CD8-positive, alpha-beta T cell (primary cell): ENCODE measurements at regions of chr11 and their contacts with region 1.

Region 1: DNA sequence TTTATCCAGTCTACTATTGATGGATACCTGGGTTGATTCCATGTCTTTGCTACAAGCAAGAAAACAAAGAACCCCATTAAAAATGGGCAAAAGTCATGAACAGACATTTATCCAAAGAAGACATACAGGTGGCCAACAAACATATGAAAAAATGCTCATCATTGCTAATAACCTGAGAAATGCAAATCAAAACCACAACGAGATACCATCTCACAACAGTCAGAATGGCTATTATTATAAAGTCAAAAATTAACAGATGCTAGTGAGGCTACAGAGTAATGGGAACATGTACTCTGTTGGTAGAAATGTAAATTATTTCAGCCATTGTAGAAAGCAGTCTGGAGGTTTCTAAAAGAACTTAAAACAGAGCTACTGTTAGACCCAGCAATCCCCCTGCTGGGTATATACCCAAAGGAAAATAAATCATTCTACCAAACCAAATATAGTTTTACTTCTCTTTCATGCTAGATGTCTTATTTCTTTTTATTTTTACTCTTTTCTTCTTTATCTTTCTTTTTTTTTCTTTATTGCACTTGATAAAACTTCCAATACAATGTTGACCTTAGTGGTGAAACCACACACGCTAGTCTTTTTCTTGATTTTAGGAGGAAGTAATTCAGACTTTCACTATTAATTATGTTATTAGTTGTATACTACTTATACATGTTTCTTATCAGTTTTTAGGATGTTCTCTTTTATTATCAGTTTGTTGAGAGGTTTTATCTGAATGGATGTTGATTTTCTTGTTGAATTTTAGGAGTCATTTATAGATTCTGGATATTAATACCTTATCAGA is 14.3 kb downstream of the TRIM22 start:
- DNase-seq: no peak
- ATAC-seq: no peak
- H3K4me3 ChIP-seq: no peak overlapping the region
- H3K4me3 Mint-ChIP-seq: no peak overlapping the region
- H3K27ac ChIP-seq: peak overlapping the region in 1 of 2 experiments; percentile 9
- H3K27ac Mint-ChIP-seq: peak overlapping the region; percentile 73
- H3K4me1 ChIP-seq: peaks cover 21% of the 10 kb centered on the region
- H3K4me1 Mint-ChIP-seq: peaks cover 45% of the 10 kb centered on the region
- H3K27me3 ChIP-seq: no peaks in the 10 kb centered on the region
- H3K27me3 Mint-ChIP-seq: no peaks in the 10 kb centered on the region
- CTCF ChIP-seq: no peak

Region 2: GRCh38 chr11:5666391-5666770 is 37.6 kb before region 1 on chr11:
- CTCF ChIA-PET with region 1: no interaction called
- POLR2A ChIA-PET with region 1: interaction called, 3 read pairs
- intact Hi-C with region 1: loop called in 1 of 2 experiments (anchors 5 kb)
- DNase-seq: no peak
- ATAC-seq: no peak
- H3K4me3 ChIP-seq: no peak overlapping the region
- H3K4me3 Mint-ChIP-seq: no peak overlapping the region
- H3K27ac ChIP-seq: no peak overlapping the region
- H3K27ac Mint-ChIP-seq: peak overlapping the region; percentile 35
- H3K4me1 ChIP-seq: no peaks in the 10 kb centered on the region
- H3K4me1 Mint-ChIP-seq: no peaks in the 10 kb centered on the region
- H3K27me3 ChIP-seq: no peaks in the 10 kb centered on the region
- H3K27me3 Mint-ChIP-seq: no peaks in the 10 kb centered on the region
- CTCF ChIP-seq: no peak

Region 3: GRCh38 chr11:5719703-5720495 is 16.0 kb after region 1 on chr11:
- CTCF ChIA-PET with region 1: no interaction called
- POLR2A ChIA-PET with region 1: no interaction called
- intact Hi-C with region 1: no loop called
- DNase-seq: no peak
- ATAC-seq: no peak
- H3K4me3 ChIP-seq: no peak overlapping the region
- H3K4me3 Mint-ChIP-seq: no peak overlapping the region
- H3K27ac ChIP-seq: no peak overlapping the region
- H3K27ac Mint-ChIP-seq: peak overlapping the region; percentile 41
- H3K4me1 ChIP-seq: no peaks in the 10 kb centered on the region
- H3K4me1 Mint-ChIP-seq: no peaks in the 10 kb centered on the region
- H3K27me3 ChIP-seq: no peaks in the 10 kb centered on the region
- H3K27me3 Mint-ChIP-seq: no peaks in the 10 kb centered on the region
- CTCF ChIP-seq: no peak